ENCODE measurements at regions of chr1 and their contacts with region 1.

Region 1: DNA sequence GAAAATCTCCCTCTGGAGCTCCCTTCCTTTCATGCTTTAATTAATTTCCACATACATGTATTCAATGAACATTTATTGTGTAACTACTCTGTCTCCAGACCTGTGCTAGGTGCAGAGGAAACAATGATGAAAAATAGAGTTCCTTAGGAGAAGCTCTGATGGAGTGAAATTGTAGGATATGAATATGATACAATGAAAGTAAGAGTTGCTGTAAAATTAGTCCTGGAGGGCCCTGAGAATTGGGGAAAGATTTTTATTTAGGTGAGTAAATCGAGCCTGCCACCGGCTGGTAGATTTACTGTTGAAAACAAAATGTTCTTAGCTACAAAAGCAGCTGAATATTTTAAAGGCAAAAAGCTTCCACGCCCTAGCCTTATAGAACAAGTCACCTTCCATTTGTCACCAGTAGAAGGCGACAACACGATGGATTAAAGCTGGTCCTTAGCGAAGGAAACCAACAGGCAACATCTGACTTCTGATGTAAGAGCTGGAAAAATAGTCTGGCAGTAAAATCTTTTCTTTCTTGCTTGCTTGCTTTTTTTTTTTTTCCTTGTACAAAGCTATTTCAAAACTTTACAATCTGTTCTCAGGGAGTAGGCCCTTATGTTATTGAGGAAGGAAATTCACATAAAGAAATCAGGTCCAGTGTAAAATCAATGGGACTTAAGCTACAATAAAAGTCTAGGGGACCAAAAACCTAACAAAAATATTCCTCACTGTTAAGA is 82.0 kb upstream of the ROR1 start:
- DNase-seq: peak; percentile 90
- H3K4me3 ChIP-seq: no peak overlapping the region
- H3K27ac ChIP-seq: no peak overlapping the region
- H3K4me1 ChIP-seq: no peaks in the 10 kb centered on the region
- H3K27me3 ChIP-seq: no peaks in the 10 kb centered on the region
- CTCF ChIP-seq: peak; percentile 71 to 73
- POLR2A ChIP-seq: no peak

Region 2: GRCh38 chr1:63674238-63674864 is 17.5 kb before region 1 on chr1:
- CTCF ChIA-PET with region 1: interaction called, 49 read pairs
- POLR2A ChIA-PET with region 1: no interaction called
- dilution Hi-C with region 1: no loop called
- intact Hi-C with region 1: no loop called
- DNase-seq: peak; percentile 74
- H3K4me3 ChIP-seq: no peak overlapping the region
- H3K27ac ChIP-seq: no peak overlapping the region
- H3K4me1 ChIP-seq: no peaks in the 10 kb centered on the region
- H3K27me3 ChIP-seq: peaks cover 0 to 2% of the 10 kb centered on the region in 2 experiments
- CTCF ChIP-seq: peak; percentile 74 to 83
- POLR2A ChIP-seq: no peak

Region 3: GRCh38 chr1:63731117-63732043 is 39.5 kb after region 1 on chr1:
- CTCF ChIA-PET with region 1: interaction called, 18 read pairs
- POLR2A ChIA-PET with region 1: no interaction called
- dilution Hi-C with region 1: no loop called
- intact Hi-C with region 1: loop called (anchors 2 kb)
- DNase-seq: peak; percentile 88
- H3K4me3 ChIP-seq: no peak overlapping the region
- H3K27ac ChIP-seq: peak overlapping the region; percentile 69
- H3K4me1 ChIP-seq: peaks cover 12% of the 10 kb centered on the region
- H3K27me3 ChIP-seq: no peaks in the 10 kb centered on the region
- CTCF ChIP-seq: no peak
- POLR2A ChIP-seq: no peak

Region 4: DNA sequence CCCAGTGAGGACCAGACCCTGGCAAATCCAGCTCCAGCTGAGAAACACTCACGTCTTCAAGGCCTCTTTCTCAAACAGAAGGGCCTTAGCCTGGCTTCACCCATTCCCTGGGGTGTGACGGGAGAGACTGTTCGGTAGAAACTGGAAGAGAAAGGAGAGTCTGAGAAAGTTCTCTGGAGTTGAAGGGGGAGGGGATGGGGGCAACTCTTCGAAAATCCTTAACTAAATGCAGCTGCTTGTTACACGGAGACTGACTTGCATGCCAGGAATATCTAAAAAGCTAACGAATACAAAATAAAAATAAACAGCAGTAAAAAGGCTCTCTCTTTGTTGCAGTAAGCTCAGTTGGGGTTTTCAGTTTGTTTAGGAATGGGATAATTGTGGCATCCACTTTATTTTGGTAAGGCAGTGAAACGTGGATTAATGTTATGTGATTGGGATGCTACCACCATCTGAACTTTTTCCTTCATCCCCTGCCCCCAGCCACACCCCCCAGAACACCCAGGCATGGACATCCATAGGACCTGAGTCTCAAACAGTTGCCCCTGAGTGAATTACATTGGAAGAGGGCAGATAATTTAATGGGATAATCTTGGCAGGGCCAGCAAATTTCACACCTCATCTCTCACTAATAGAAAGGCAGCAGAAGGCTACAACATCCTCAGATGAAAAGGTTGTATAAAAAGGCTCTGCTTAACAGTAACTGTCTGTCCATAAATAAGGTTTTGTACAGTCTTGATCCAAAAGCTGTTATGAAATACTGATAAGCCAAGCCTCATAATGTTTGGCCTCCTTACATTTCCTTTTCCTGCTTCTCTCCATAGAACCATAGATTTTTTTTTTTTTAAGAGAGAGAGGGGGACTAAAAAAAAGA is 87.7 kb after region 1 on chr1:
- CTCF ChIA-PET with region 1: interaction called, 54 read pairs
- POLR2A ChIA-PET with region 1: no interaction called
- dilution Hi-C with region 1: no loop called
- intact Hi-C with region 1: loop called (anchors 1 kb)
- DNase-seq: no peak
- H3K4me3 ChIP-seq: no peak overlapping the region
- H3K27ac ChIP-seq: no peak overlapping the region
- H3K4me1 ChIP-seq: peaks cover 8% of the 10 kb centered on the region
- H3K27me3 ChIP-seq: peaks cover 0 to 6% of the 10 kb centered on the region in 2 experiments
- CTCF ChIP-seq: no peak
- POLR2A ChIP-seq: no peak

Region 5: DNA sequence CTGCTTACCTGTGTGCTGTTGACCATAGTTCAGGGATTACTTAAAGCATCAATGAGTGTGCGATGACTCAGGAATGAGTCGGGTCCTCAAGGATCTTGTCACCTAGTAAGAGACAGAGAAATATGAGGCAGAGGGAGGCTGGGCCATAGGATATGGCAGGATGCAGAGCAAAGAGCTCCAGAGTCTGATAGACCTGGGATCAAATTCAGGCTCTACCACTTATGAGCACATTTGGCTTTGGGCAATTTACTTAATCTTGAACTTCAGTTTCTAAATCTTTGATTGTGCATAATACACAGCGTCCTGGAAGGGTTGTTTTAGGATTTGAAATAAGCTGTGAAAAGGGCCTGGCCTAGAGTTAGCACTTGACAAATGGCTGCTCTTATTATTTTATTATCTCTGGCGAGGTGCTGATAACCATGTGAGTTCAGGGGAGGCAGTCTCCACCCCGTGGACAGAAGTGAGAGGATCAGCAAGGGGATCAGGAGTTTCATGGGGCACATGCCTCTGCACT is 176.5 kb after region 1 on chr1:
- CTCF ChIA-PET with region 1: interaction called, 16 read pairs
- POLR2A ChIA-PET with region 1: no interaction called
- dilution Hi-C with region 1: no loop called
- intact Hi-C with region 1: loop called (anchors 2 kb)
- DNase-seq: peak; percentile 8
- H3K4me3 ChIP-seq: no peak overlapping the region
- H3K27ac ChIP-seq: no peak overlapping the region
- H3K4me1 ChIP-seq: no peaks in the 10 kb centered on the region
- H3K27me3 ChIP-seq: no peaks in the 10 kb centered on the region
- CTCF ChIP-seq: no peak
- POLR2A ChIP-seq: no peak

Region 6: DNA sequence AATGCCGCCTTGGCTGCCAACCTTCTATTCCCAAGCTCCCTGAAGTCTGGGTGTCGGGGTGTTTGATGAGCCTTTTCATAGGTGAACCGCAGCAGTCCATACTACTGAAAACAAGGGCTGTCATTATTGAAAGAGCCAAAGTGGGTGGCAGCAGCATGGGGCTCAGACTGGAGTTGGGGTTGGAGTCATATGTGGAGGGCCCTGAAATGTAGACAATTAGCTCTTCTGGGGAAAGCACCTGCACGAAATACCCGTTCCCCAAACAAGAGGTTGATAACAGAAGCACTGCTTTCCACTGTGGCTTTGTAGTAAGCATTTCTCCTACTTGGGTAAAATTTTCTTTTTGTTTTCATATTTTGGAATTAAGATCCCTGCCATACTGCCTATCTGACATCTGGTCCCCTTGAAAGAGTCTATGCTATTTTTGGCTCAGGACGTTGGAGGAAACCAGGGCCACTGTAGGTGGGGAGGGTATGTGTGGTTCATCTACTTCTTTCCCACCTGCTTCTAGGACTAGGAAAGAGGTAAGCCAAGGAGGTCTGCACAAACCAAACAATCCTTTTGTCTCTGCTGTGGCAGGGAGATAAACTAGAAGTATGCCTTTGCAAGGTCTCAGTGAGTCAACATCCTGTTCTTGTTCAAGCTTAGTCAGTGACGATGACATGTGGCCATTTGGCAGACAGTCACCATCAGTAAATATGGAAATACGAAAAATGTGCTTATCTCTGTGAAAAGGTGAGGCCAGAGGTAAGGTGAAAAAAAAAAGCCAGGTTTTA is 314.6 kb after region 1 on chr1:
- CTCF ChIA-PET with region 1: interaction called, 14 read pairs
- POLR2A ChIA-PET with region 1: no interaction called
- dilution Hi-C with region 1: no loop called
- intact Hi-C with region 1: loop called (anchors 5 kb)
- DNase-seq: peak; percentile 84
- H3K4me3 ChIP-seq: no peak overlapping the region
- H3K27ac ChIP-seq: peak overlapping the region; percentile 57
- H3K4me1 ChIP-seq: peaks cover 14% of the 10 kb centered on the region
- H3K27me3 ChIP-seq: peaks cover 0 to 1% of the 10 kb centered on the region in 2 experiments
- CTCF ChIP-seq: no peak
- POLR2A ChIP-seq: no peak

Region 7: DNA sequence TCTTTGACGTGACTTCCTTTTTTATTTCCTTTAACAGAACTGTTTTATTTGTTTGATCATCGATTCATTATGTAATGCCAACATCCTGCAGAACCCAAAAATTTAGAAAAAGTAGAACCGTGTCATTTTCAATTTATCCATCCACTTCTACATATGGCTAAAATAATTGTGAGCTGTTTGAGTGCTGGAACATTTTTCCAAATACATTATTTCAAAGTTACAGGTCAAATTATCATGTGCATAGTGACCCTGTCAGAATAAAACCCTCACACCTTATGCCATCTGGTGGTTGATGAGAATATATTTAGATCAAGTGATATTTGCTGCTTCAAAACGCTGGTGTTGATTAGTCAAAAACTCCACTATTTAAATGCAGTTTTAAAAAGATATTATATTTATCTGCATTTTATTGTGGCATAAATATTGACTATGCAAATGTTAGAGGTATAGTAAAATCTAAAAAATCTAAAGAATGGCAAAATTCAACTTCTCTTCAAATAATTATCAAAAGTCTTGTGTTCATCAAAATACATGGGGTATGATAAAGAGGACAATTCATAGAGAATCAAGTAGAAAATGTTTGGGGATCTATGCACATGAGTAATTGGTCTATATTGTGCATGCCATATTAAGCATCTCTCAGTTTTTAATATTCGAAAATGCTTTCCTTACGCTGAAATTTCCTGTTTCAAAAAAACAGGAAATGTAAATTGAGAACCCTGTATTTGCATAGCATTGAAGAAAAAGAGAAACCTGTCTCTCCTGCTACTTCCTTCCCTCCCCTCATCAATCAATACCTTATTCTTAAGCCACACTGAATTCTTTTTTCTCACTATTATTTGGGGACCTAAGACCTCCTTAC is 551.3 kb after region 1 on chr1:
- CTCF ChIA-PET with region 1: interaction called, 98 read pairs
- POLR2A ChIA-PET with region 1: no interaction called
- dilution Hi-C with region 1: no loop called
- intact Hi-C with region 1: loop called (anchors 1 kb)
- DNase-seq: peak; percentile 46
- H3K4me3 ChIP-seq: no peak overlapping the region
- H3K27ac ChIP-seq: no peak overlapping the region
- H3K4me1 ChIP-seq: peaks cover 11% of the 10 kb centered on the region
- H3K27me3 ChIP-seq: peaks cover 7 to 11% of the 10 kb centered on the region in 2 experiments
- CTCF ChIP-seq: peak; percentile 5 to 11
- POLR2A ChIP-seq: no peak

Region 8: GRCh38 chr1:64263335-64263734 is 571.5 kb after region 1 on chr1:
- CTCF ChIA-PET with region 1: no interaction called
- POLR2A ChIA-PET with region 1: no interaction called
- dilution Hi-C with region 1: no loop called
- intact Hi-C with region 1: no loop called
- DNase-seq: peak; percentile 36
- H3K4me3 ChIP-seq: no peak overlapping the region
- H3K27ac ChIP-seq: no peak overlapping the region
- H3K4me1 ChIP-seq: peaks cover 9% of the 10 kb centered on the region
- H3K27me3 ChIP-seq: peaks cover 2 to 5% of the 10 kb centered on the region in 2 experiments
- CTCF ChIP-seq: no peak
- POLR2A ChIP-seq: no peak